ENCODE measurements at regions of chr4 and their contacts with region 1.

Region 1: DNA sequence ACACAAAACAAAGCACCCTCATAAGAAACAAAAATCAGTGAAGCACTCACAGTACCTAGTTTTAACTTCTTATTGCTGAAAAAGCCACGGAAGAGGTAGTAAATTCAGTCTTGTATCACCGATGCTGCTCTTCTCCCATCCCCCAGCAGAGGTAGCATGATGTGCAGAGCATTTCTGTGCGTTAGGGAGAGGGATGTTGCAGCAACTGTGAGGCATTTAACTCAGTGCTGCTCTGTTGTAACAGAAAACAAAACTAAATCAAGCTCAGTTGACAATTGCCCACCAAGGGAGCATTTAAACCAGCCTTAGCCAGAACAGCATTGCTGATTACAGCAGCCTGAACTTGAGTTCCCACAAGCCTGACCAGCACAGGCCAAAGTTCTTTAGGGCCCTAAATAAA is 1279.7 kb upstream of the ADGRL3 start:
- DNase-seq: no peak
- H3K4me3 ChIP-seq: no peak overlapping the region
- H3K4me3 Mint-ChIP-seq: no peak overlapping the region
- H3K27ac Mint-ChIP-seq: no peak overlapping the region
- H3K4me1 ChIP-seq: no peaks in the 10 kb centered on the region
- H3K4me1 Mint-ChIP-seq: no peaks in the 10 kb centered on the region
- H3K27me3 ChIP-seq: no peaks in the 10 kb centered on the region
- H3K27me3 Mint-ChIP-seq: no peaks in the 10 kb centered on the region
- CTCF ChIP-seq: no peak

Region 2: DNA sequence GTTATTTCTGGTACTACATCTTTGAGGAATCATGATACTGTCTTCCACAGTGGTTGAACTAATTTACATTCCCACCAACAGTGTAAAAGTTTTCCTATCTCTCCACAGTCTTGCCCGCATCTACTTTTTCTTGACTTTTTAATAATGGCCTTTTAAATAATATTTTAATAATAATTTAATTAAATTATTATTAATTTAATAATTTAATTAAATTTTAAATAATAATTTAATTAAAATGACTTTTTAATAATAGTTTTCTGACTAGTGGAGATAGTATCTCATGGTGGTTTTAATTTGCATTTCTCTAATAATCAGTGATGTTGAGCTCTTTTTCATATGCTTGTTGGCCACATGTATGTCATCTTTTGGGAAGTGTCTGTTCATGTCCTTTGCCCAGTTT is 115.2 kb before region 1 on chr4:
- CTCF ChIA-PET with region 1: no interaction called
- POLR2A ChIA-PET with region 1: no interaction called
- intact Hi-C with region 1: no loop called
- DNase-seq: no peak
- H3K4me3 ChIP-seq: no peak overlapping the region
- H3K4me3 Mint-ChIP-seq: no peak overlapping the region
- H3K27ac Mint-ChIP-seq: no peak overlapping the region
- H3K4me1 ChIP-seq: no peaks in the 10 kb centered on the region
- H3K4me1 Mint-ChIP-seq: no peaks in the 10 kb centered on the region
- H3K27me3 ChIP-seq: no peaks in the 10 kb centered on the region
- H3K27me3 Mint-ChIP-seq: no peaks in the 10 kb centered on the region
- CTCF ChIP-seq: no peak

Region 3: GRCh38 chr4:61714387-61714911 is 1794.0 kb after region 1 on chr4:
- CTCF ChIA-PET with region 1: no interaction called
- POLR2A ChIA-PET with region 1: interaction called, 11 read pairs
- intact Hi-C with region 1: no loop called
- DNase-seq: no peak
- H3K4me3 ChIP-seq: no peak overlapping the region
- H3K4me3 Mint-ChIP-seq: no peak overlapping the region
- H3K27ac Mint-ChIP-seq: no peak overlapping the region
- H3K4me1 ChIP-seq: no peaks in the 10 kb centered on the region
- H3K4me1 Mint-ChIP-seq: no peaks in the 10 kb centered on the region
- H3K27me3 ChIP-seq: no peaks in the 10 kb centered on the region
- H3K27me3 Mint-ChIP-seq: no peaks in the 10 kb centered on the region
- CTCF ChIP-seq: no peak